ENCODE measurements at regions of chr20 and their contacts with region 1.

Region 1: DNA sequence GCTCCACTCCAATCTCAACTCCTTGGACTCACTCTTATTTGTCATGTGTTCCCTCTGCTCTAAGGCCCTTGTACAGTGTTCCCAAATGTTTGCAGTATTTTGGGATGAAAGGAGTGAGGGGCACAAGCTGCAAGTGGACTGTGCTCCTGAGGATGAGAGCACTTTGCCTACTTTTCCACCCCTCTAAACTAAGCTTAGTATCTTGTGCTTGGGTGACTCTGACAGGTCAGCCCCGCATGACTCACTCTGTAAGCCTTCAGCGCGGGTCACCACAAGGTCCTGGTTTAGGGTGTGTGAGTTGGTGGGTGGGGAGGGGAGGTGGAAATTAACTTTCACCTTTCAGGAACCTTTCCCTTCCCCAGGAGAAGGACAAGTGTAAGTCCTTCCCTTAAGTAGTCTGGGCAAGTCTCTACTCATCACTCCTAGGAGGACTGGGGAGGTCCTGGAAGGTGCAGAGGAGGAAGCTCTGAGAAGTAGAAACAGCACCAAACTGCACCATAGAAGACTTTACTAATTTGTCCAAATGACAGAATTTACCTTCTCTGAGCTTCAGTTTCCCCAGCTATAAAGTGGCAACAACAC is 68.8 kb upstream of the EPB41L1 start:
- DNase-seq: peak; percentile 95 to 99
- H3K4me3 ChIP-seq: no peak overlapping the region
- H3K4me3 Mint-ChIP-seq: peak overlapping the region; percentile 66
- H3K27ac Mint-ChIP-seq: peak overlapping the region; percentile 99
- H3K4me1 ChIP-seq: peaks cover 80% of the 10 kb centered on the region
- H3K4me1 Mint-ChIP-seq: peaks cover 67% of the 10 kb centered on the region
- H3K27me3 ChIP-seq: no peaks in the 10 kb centered on the region
- H3K27me3 Mint-ChIP-seq: no peaks in the 10 kb centered on the region
- CTCF ChIP-seq: no peak

Region 2: DNA sequence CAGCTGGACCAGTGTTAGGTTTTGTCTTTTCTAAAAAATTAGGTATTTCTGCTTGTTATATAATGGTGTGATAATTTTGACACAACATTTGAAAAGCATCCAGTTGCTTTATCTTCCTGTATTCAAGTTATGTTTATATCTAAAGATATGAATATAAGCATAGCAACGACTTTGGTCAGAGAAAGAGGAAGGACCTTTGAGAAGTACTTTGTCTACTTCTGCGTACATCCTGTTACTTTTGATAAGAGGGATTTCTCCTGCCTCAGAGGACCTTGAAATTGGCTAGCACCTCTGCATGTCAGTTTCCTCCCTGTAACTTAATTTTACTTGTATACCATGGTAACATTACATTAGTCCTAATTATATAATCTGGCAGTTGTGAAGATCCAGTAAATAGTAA is 289.2 kb before region 1 on chr20:
- CTCF ChIA-PET with region 1: no interaction called
- POLR2A ChIA-PET with region 1: no interaction called
- intact Hi-C with region 1: no loop called
- DNase-seq: no peak
- H3K4me3 ChIP-seq: no peak overlapping the region
- H3K4me3 Mint-ChIP-seq: no peak overlapping the region
- H3K27ac Mint-ChIP-seq: no peak overlapping the region
- H3K4me1 ChIP-seq: no peaks in the 10 kb centered on the region
- H3K4me1 Mint-ChIP-seq: peaks cover 3% of the 10 kb centered on the region
- H3K27me3 ChIP-seq: no peaks in the 10 kb centered on the region
- H3K27me3 Mint-ChIP-seq: no peaks in the 10 kb centered on the region
- CTCF ChIP-seq: no peak

Region 3: GRCh38 chr20:36050436-36051317 is 35.1 kb before region 1 on chr20:
- CTCF ChIA-PET with region 1: no interaction called
- POLR2A ChIA-PET with region 1: no interaction called
- intact Hi-C with region 1: loop called (anchors 1 kb)
- DNase-seq: peak; percentile 99
- H3K4me3 ChIP-seq: peak overlapping the region; percentile 67
- H3K4me3 Mint-ChIP-seq: peak overlapping the region; percentile 69
- H3K27ac Mint-ChIP-seq: peak overlapping the region; percentile 88
- H3K4me1 ChIP-seq: peaks cover 34% of the 10 kb centered on the region
- H3K4me1 Mint-ChIP-seq: peaks cover 44% of the 10 kb centered on the region
- H3K27me3 ChIP-seq: no peaks in the 10 kb centered on the region
- H3K27me3 Mint-ChIP-seq: no peaks in the 10 kb centered on the region
- CTCF ChIP-seq: no peak

Region 4: GRCh38 chr20:36070451-36070850 is 15.3 kb before region 1 on chr20:
- CTCF ChIA-PET with region 1: interaction called, 14 read pairs
- POLR2A ChIA-PET with region 1: interaction called, 11 read pairs
- intact Hi-C with region 1: loop called (anchors 1 kb)
- DNase-seq: peak; percentile 74
- H3K4me3 ChIP-seq: no peak overlapping the region
- H3K4me3 Mint-ChIP-seq: no peak overlapping the region
- H3K27ac Mint-ChIP-seq: peak overlapping the region; percentile 26
- H3K4me1 ChIP-seq: peaks cover 16% of the 10 kb centered on the region
- H3K4me1 Mint-ChIP-seq: peaks cover 13% of the 10 kb centered on the region
- H3K27me3 ChIP-seq: no peaks in the 10 kb centered on the region
- H3K27me3 Mint-ChIP-seq: no peaks in the 10 kb centered on the region
- CTCF ChIP-seq: no peak

Region 5: DNA sequence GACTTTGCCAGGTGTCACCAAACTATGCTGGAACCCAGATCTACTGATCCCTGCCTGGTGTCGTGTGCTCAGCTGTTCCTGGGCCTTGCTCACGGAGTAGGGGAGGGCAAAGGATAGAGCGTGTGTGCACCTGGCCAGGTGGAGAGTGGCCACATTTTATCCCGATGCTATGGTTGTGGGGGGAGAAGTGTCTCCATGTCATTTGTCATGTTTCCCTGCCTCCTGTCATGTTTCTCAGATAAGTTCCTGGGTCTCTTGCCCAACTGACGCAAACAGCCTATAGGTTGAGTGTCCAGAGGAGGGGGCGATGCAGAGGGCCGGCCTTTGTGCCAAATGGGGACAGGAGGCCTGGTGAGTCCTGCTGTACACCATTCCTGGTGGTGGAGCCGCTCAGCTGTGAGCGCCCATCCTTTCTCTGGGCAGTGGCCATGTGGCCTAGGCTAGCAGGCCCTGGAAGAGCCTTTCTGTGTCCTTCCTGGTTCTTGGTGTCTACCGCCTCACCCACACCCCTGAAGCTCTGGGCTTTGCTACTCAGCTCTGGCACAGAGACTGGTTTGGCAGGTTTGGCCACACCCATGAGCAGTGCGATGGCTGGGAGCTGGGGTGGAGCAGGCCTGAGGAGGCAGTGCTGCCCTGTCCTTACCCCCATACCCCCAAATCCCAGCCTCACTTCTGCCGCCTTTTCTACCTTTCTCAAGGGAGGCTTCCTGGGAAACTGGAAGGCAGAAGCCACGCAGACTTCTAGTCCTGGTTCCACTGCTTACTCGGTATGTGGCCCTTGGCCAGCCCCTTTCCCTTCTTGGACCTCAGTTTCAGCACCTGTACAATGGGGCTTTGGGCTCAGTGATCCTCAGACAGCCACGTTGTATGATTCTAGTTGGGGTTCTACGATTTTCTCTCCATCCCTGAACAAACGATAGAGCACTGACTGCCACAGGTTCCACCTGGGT is 36.5 kb after region 1 on chr20:
- CTCF ChIA-PET with region 1: no interaction called
- POLR2A ChIA-PET with region 1: no interaction called
- intact Hi-C with region 1: no loop called
- DNase-seq: peak; percentile 90 to 93
- H3K4me3 ChIP-seq: no peak overlapping the region
- H3K4me3 Mint-ChIP-seq: no peak overlapping the region
- H3K27ac Mint-ChIP-seq: peak overlapping the region; percentile 38
- H3K4me1 ChIP-seq: peaks cover 22% of the 10 kb centered on the region
- H3K4me1 Mint-ChIP-seq: peaks cover 22% of the 10 kb centered on the region
- H3K27me3 ChIP-seq: no peaks in the 10 kb centered on the region
- H3K27me3 Mint-ChIP-seq: no peaks in the 10 kb centered on the region
- CTCF ChIP-seq: no peak